ENCODE measurements at regions of chr16 and their contacts with region 1.

Region 1: GRCh38 chr16:50210266-50211038 is 55.9 kb upstream of the ADCY7 start:
- DNase-seq: peak; percentile 25 to 73 (median 61)
- ATAC-seq: peak; percentile 93
- H3K4me3 ChIP-seq: no peak overlapping the region
- H3K4me3 Mint-ChIP-seq: no peak overlapping the region
- H3K27ac ChIP-seq: no peak overlapping the region
- H3K27ac Mint-ChIP-seq: peak overlapping the region; percentile 48 to 90 (median 83)
- H3K4me1 ChIP-seq: no peaks in the 10 kb centered on the region
- H3K4me1 Mint-ChIP-seq: peaks cover 17 to 50% (median 38%) of the 10 kb centered on the region in 7 donors
- H3K27me3 ChIP-seq: no peaks in the 10 kb centered on the region
- H3K27me3 Mint-ChIP-seq: no peaks in the 10 kb centered on the region

Region 2: DNA sequence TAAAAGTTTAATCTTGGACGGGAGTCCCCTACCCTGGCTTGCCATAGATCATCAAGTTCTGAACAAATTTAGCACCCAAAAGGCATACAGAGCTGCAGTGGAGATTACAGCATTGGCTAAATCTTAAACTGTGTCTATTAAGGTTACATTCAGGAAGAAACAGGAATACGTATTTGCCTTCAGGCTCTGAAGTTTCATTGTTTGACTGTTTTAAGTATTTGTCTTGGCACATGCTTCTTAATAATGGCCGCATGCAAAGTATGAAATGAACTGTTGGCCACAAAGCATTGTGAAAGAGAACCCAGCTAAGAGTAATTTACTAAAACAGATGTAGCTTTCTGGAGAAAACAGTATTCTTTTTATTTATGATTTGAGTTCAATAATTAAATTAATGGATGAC is 249.4 kb before region 1 on chr16:
- CTCF ChIA-PET with region 1: no interaction called
- POLR2A ChIA-PET with region 1: no interaction called
- intact Hi-C with region 1: no loop called
- DNase-seq: no peak
- ATAC-seq: no peak
- H3K4me3 ChIP-seq: no peak overlapping the region
- H3K4me3 Mint-ChIP-seq: no peak overlapping the region
- H3K27ac ChIP-seq: no peak overlapping the region
- H3K27ac Mint-ChIP-seq: no peak overlapping the region
- H3K4me1 ChIP-seq: no peaks in the 10 kb centered on the region
- H3K4me1 Mint-ChIP-seq: peaks cover 0 to 1% (median 0%) of the 10 kb centered on the region in 7 donors
- H3K27me3 ChIP-seq: no peaks in the 10 kb centered on the region
- H3K27me3 Mint-ChIP-seq: peaks cover 6 to 18% (median 10%) of the 10 kb centered on the region in 5 donors

Region 3: DNA sequence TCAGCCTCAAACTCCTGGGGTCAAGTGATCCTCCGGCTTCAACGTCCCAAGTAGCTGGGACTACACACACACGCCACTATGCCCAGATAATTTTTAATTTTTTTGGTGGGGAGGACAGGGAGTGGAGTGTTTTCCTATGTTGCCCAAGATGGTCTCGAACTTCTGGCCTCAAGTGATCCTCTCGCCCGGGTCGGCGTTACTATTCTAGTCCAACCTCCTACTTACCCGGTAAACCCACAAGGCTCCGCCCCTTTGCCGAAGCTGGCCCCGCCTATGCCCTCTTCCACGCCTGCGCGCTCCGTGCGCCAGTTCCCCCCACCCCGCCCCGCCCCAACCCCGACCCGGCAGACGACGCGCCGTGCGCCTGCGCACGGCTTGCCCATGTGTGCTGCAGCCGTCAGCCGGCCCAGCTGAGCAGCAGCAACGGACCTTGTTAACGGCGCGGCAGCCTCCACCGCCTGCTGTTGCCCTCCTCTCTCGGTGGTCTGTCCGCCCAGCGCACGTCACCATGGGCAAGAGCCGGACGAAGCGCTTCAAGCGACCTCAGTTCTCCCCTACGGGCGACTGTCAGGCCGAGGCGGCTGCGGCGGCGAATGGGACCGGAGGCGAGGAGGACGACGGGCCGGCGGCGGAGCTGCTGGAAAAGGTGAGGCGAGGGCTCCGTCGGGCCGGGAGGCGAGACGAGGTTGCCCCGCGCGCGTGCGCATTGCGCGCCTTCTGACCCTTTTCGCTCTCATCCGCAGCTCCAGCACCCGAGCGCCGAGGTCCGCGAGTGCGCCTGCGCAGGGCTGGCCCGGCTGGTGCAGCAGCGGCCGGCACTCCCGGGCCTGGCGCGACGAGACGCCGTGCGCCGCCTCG is 144.6 kb before region 1 on chr16 and contains the start of gene HEATR3:
- CTCF ChIA-PET with region 1: interaction called, 38 read pairs
- POLR2A ChIA-PET with region 1: interaction called, 8 read pairs
- intact Hi-C with region 1: loop called (anchors 1 kb)
- DNase-seq: peak; percentile 86 to 96 (median 90)
- ATAC-seq: peak; percentile 93
- H3K4me3 ChIP-seq: peak within 1 kb of the TSS; percentile 91
- H3K4me3 Mint-ChIP-seq: peak within 1 kb of the TSS; percentile 80 to 97 (median 92)
- H3K27ac ChIP-seq: peak within 1 kb of the TSS; percentile 81
- H3K27ac Mint-ChIP-seq: peak within 1 kb of the TSS; percentile 55 to 96 (median 93)
- H3K4me1 ChIP-seq: peaks cover 17 to 18% of the 10 kb centered on the region in 2 donors
- H3K4me1 Mint-ChIP-seq: peaks cover 34 to 49% (median 44%) of the 10 kb centered on the region in 7 donors
- H3K27me3 ChIP-seq: no peaks in the 10 kb centered on the region
- H3K27me3 Mint-ChIP-seq: no peaks in the 10 kb centered on the region
- total RNA-seq, gene HEATR3: 12.5 to 27.5 (median 23.5) TPM

Region 4: DNA sequence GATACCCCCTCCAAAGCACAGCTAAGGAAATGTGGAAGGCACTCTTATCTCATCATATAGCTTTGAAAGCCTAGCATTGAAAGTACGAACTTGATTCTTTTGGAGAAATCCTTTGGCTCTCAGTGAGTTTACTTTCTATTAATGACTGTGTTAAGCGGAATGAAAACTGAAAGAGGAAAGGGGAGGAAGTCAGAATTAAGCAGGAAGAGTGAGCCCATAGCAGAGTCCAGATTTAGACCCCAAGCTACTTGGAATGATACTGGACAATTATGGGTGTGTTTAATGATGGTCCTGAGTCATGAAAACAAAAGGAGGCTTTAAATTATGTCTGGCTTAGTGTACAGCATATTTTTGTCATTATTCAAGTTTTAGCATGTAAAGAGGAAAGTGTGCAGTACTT is 15.2 kb before region 1 on chr16:
- CTCF ChIA-PET with region 1: interaction called, 14 read pairs
- POLR2A ChIA-PET with region 1: interaction called, 3 read pairs
- intact Hi-C with region 1: loop called in 1 of 2 experiments (anchors 2 kb)
- DNase-seq: no peak
- ATAC-seq: no peak
- H3K4me3 ChIP-seq: no peak overlapping the region
- H3K4me3 Mint-ChIP-seq: peak overlapping the region in 8 of 10 donors; percentile 4 to 71 (median 45)
- H3K27ac ChIP-seq: peak overlapping the region; percentile 3
- H3K27ac Mint-ChIP-seq: peak overlapping the region; percentile 11 to 87 (median 56)
- H3K4me1 ChIP-seq: peaks cover 18 to 25% of the 10 kb centered on the region in 2 donors
- H3K4me1 Mint-ChIP-seq: peaks cover 46 to 86% (median 75%) of the 10 kb centered on the region in 7 donors
- H3K27me3 ChIP-seq: no peaks in the 10 kb centered on the region
- H3K27me3 Mint-ChIP-seq: no peaks in the 10 kb centered on the region

Region 5: GRCh38 chr16:50354629-50355456 is 144.4 kb after region 1 on chr16:
- CTCF ChIA-PET with region 1: interaction called, 17 read pairs
- POLR2A ChIA-PET with region 1: no interaction called
- intact Hi-C with region 1: loop called (anchors 1 kb)
- DNase-seq: peak in 5 of 9 donors; percentile 32 to 63 (median 51)
- ATAC-seq: peak; percentile 68
- H3K4me3 ChIP-seq: no peak overlapping the region
- H3K4me3 Mint-ChIP-seq: peak overlapping the region in 1 of 10 donors; percentile 21
- H3K27ac ChIP-seq: peak overlapping the region; percentile 31
- H3K27ac Mint-ChIP-seq: peak overlapping the region in 8 of 9 donors; percentile 2 to 91 (median 68)
- H3K4me1 ChIP-seq: no peaks in the 10 kb centered on the region
- H3K4me1 Mint-ChIP-seq: peaks cover 9 to 41% (median 25%) of the 10 kb centered on the region in 7 donors
- H3K27me3 ChIP-seq: no peaks in the 10 kb centered on the region
- H3K27me3 Mint-ChIP-seq: no peaks in the 10 kb centered on the region

Region 6: DNA sequence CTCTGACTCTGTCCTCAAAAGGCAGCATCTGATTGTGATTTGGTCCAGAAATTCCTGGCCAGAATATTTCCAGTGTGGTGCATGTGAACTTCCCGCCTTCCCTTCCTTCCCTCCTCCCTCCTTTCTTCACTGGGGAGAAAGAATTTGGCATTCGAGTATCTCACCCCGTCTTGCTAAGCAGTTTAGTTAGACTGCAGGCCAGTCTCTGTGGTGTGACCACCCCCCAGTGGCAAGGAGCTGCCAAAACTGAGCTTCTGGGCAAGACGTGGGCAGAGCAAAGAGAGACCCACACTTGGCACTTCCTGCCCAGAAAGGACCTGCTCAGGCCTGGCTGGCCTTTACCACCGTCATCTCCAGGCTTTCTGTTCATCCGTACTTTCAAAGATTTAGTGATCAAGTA is 434.3 kb after region 1 on chr16:
- CTCF ChIA-PET with region 1: interaction called, 5 read pairs
- POLR2A ChIA-PET with region 1: no interaction called
- intact Hi-C with region 1: loop called in 1 of 2 experiments (anchors 1 kb)
- DNase-seq: peak in 6 of 9 donors; percentile 31 to 53 (median 48)
- ATAC-seq: peak; percentile 72
- H3K4me3 ChIP-seq: no peak overlapping the region
- H3K4me3 Mint-ChIP-seq: no peak overlapping the region
- H3K27ac ChIP-seq: no peak overlapping the region
- H3K27ac Mint-ChIP-seq: peak overlapping the region in 5 of 9 donors; percentile 0 to 39 (median 16)
- H3K4me1 ChIP-seq: no peaks in the 10 kb centered on the region
- H3K4me1 Mint-ChIP-seq: peaks cover 5 to 7% (median 6%) of the 10 kb centered on the region in 7 donors
- H3K27me3 ChIP-seq: no peaks in the 10 kb centered on the region
- H3K27me3 Mint-ChIP-seq: no peaks in the 10 kb centered on the region

Region 7: DNA sequence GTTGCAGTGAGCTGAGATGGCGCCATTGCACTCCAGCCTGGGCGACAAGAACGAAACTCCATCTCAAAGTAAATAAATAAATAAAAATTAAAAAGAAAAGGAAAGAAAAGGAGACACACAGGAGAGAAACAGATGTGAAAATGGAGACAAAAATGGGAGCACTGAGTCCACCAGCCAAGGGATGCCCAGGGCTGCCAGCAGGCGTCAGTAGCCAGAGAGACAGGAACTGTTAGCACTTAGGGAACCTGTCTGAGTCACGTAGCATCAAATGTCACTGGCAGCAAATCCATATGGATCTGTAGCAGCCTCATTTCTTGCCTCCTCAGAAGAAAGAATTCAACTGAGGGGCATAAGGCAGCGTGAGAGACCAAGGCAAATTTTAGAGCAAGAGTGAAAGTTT is 611.1 kb after region 1 on chr16:
- CTCF ChIA-PET with region 1: no interaction called
- POLR2A ChIA-PET with region 1: no interaction called
- intact Hi-C with region 1: no loop called
- DNase-seq: no peak
- ATAC-seq: no peak
- H3K4me3 ChIP-seq: no peak overlapping the region
- H3K4me3 Mint-ChIP-seq: no peak overlapping the region
- H3K27ac ChIP-seq: no peak overlapping the region
- H3K27ac Mint-ChIP-seq: no peak overlapping the region
- H3K4me1 ChIP-seq: no peaks in the 10 kb centered on the region
- H3K4me1 Mint-ChIP-seq: peaks cover 0 to 6% (median 0%) of the 10 kb centered on the region in 7 donors
- H3K27me3 ChIP-seq: no peaks in the 10 kb centered on the region
- H3K27me3 Mint-ChIP-seq: peaks cover 8 to 24% (median 16%) of the 10 kb centered on the region in 5 donors